AG04450 (cell line): ENCODE measurements at regions of chr6 and their contacts with region 1.

Region 1: GRCh38 chr6:35203680-35204079 is 10.1 kb upstream of the SCUBE3 start:
- DNase-seq: no peak
- H3K4me3 ChIP-seq: no peak overlapping the region
- H3K27ac ChIP-seq: no peak overlapping the region
- H3K27me3 ChIP-seq: peaks cover 21% of the 10 kb centered on the region
- CTCF ChIP-seq: no peak

Region 2: DNA sequence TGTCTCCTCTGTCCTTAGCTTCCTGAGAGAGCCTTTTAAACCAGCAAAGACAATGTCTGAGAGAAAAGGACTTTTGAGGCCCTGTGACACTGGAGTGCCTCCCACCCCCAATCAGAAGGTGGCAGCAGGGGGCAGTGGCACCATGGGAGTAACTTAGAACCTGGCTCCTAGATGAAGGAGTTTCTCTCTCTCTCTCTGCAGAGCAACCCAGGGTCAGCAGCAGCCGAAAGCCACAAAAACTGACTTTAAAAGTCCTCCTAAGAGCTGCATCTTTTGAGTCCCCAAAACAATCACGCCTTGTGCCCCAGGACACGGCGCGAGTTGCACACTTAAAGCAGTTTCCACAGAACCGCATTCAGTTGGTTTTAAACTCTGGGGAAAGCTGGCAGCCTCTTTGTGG is 57.2 kb before region 1 on chr6:
- CTCF ChIA-PET with region 1: interaction called, 41 read pairs
- POLR2A ChIA-PET with region 1: interaction called, 3 read pairs
- DNase-seq: no peak
- H3K4me3 ChIP-seq: no peak overlapping the region
- H3K27ac ChIP-seq: no peak overlapping the region
- H3K27me3 ChIP-seq: no peaks in the 10 kb centered on the region
- CTCF ChIP-seq: peak; percentile 68

Region 3: GRCh38 chr6:35152067-35152707 is 51.5 kb before region 1 on chr6:
- CTCF ChIA-PET with region 1: interaction called, 41 read pairs
- POLR2A ChIA-PET with region 1: interaction called, 3 read pairs
- DNase-seq: no peak
- H3K4me3 ChIP-seq: no peak overlapping the region
- H3K27ac ChIP-seq: no peak overlapping the region
- H3K27me3 ChIP-seq: no peaks in the 10 kb centered on the region
- CTCF ChIP-seq: no peak

Region 4: GRCh38 chr6:35181933-35182612 is 21.6 kb before region 1 on chr6:
- CTCF ChIA-PET with region 1: interaction called, 35 read pairs
- POLR2A ChIA-PET with region 1: no interaction called
- DNase-seq: no peak
- H3K4me3 ChIP-seq: no peak overlapping the region
- H3K27ac ChIP-seq: peak overlapping the region; percentile 39
- H3K27me3 ChIP-seq: no peaks in the 10 kb centered on the region
- CTCF ChIP-seq: no peak

Region 5: GRCh38 chr6:35213824-35214756 is 10.4 kb after region 1 on chr6 and contains the start of gene SCUBE3:
- CTCF ChIA-PET with region 1: interaction called, 39 read pairs
- POLR2A ChIA-PET with region 1: no interaction called
- DNase-seq: no peak
- H3K4me3 ChIP-seq: peak within 1 kb of the TSS; percentile 65
- H3K27ac ChIP-seq: no peak within 1 kb of the TSS
- H3K27me3 ChIP-seq: peaks cover 19% of the 10 kb centered on the region
- CTCF ChIP-seq: no peak
- polyA plus RNA-seq, gene SCUBE3: 6.7 and 7.7 TPM in 2 replicates

Region 6: GRCh38 chr6:35240840-35241801 is 37.4 kb after region 1 on chr6:
- CTCF ChIA-PET with region 1: interaction called, 23 read pairs
- POLR2A ChIA-PET with region 1: no interaction called
- DNase-seq: no peak
- H3K4me3 ChIP-seq: no peak overlapping the region
- H3K27ac ChIP-seq: no peak overlapping the region
- H3K27me3 ChIP-seq: no peaks in the 10 kb centered on the region
- CTCF ChIP-seq: peak; percentile 97